Activated CD4-positive, alpha-beta T cell treated with anti-CD3 and anti-CD28 coated beads for 36 hours (primary cell): ENCODE measurements at regions of chr5 and their contacts with region 1.

Region 1: GRCh38 chr5:79612667-79613198 is 492 bp downstream of the TENT2 start:
- DNase-seq: no peak
- ATAC-seq: no peak
- H3K4me3 Mint-ChIP-seq: peak overlapping the region; percentile 96
- H3K27ac Mint-ChIP-seq: peak overlapping the region; percentile 97
- H3K4me1 Mint-ChIP-seq: peaks cover 35% of the 10 kb centered on the region
- H3K27me3 Mint-ChIP-seq: no peaks in the 10 kb centered on the region

Region 2: GRCh38 chr5:78294248-78295034 is 1318.3 kb before region 1 on chr5 and contains the start of gene AP3B1:
- CTCF ChIA-PET with region 1: no interaction called
- POLR2A ChIA-PET with region 1: no interaction called
- intact Hi-C with region 1: loop called in 1 of 2 experiments (anchors 10 kb)
- DNase-seq: peak; percentile 99
- ATAC-seq: peak; percentile 94
- H3K4me3 Mint-ChIP-seq: peak within 1 kb of the TSS; percentile 88
- H3K27ac Mint-ChIP-seq: peak within 1 kb of the TSS; percentile 99
- H3K4me1 Mint-ChIP-seq: peaks cover 33% of the 10 kb centered on the region
- H3K27me3 Mint-ChIP-seq: no peaks in the 10 kb centered on the region
- total RNA-seq, gene AP3B1: 41.2 to 55.7 TPM

Region 3: GRCh38 chr5:79448336-79448735 is 164.4 kb before region 1 on chr5:
- CTCF ChIA-PET with region 1: no interaction called
- POLR2A ChIA-PET with region 1: no interaction called
- intact Hi-C with region 1: no loop called
- DNase-seq: no peak
- ATAC-seq: no peak
- H3K4me3 Mint-ChIP-seq: no peak overlapping the region
- H3K27ac Mint-ChIP-seq: no peak overlapping the region
- H3K4me1 Mint-ChIP-seq: no peaks in the 10 kb centered on the region
- H3K27me3 Mint-ChIP-seq: no peaks in the 10 kb centered on the region

Region 4: DNA sequence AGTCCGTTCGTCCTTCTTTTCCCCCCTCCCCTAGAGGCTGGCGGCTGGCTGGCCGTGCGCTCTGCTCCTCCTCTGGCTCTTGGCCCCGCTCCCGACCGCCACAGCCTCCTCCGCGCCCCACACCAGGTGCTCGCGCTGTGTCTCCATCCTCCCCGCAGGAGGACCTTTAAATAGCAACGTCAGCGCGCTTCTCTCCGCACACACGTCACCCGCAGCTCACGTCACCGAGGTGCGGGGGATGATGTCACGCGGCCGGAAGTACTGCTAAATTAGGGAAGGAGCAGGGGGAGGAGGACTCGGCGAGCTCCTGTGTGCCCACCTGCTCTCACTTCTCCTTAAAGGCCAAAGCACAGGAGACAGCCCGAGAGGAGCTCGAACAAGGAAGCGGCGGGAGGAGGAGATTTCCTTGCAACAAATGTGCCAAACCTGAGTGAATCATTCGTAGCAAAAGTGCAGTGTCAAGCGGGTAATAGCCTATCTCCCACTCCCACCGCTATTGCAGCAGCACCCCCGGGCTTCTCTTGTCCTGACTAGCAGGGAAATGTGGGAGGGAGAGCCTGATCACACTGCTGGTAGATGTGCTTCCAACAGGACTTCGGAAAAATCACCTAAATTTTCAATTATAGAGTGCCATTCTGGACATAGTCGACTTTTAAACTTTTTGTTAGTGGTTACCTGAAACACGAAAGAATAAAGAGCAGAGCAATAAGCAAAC is 98.2 kb before region 1 on chr5:
- CTCF ChIA-PET with region 1: interaction called, 3 read pairs
- POLR2A ChIA-PET with region 1: no interaction called
- intact Hi-C with region 1: loop called (anchors 1 to 2 kb)
- DNase-seq: peak; percentile 94
- ATAC-seq: peak; percentile 82
- H3K4me3 Mint-ChIP-seq: peak overlapping the region; percentile 93
- H3K27ac Mint-ChIP-seq: peak overlapping the region; percentile 97
- H3K4me1 Mint-ChIP-seq: peaks cover 35% of the 10 kb centered on the region
- H3K27me3 Mint-ChIP-seq: peaks cover 15% of the 10 kb centered on the region

Region 5: DNA sequence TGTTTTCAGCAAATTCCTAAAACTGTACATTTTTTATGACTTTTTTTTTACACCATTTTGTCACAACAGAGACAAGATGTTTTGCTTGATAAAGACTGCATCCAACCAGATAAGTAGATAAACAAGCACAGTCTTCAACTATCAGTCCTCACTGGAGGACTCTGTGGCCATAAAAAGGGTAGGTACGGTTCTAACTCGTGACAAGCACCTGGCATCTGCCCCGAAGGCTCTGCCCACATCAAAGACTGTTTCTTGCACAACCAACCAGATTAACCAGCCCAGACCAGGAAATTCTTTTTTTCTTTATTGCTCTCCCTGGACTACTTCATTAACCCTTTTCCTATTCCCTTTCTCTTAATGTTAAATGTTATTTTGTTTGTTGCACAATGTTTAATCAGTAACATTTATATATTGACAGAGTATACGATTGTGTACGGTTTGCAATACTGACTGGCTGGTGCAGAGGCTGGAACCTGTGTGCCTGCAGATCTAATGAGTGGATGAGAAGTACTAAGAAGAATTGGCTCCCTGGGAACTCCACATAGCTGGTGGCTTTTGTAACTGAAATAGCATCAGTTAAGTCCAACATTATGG is 569.0 kb after region 1 on chr5:
- CTCF ChIA-PET with region 1: no interaction called
- POLR2A ChIA-PET with region 1: no interaction called
- intact Hi-C with region 1: loop called in 1 of 2 experiments (anchors 10 kb)
- DNase-seq: peak; percentile 59
- ATAC-seq: peak; percentile 43
- H3K4me3 Mint-ChIP-seq: no peak overlapping the region
- H3K27ac Mint-ChIP-seq: peak overlapping the region; percentile 89
- H3K4me1 Mint-ChIP-seq: peaks cover 81% of the 10 kb centered on the region
- H3K27me3 Mint-ChIP-seq: no peaks in the 10 kb centered on the region